ENCODE measurements at regions of chrX and their contacts with region 1.

Region 1: DNA sequence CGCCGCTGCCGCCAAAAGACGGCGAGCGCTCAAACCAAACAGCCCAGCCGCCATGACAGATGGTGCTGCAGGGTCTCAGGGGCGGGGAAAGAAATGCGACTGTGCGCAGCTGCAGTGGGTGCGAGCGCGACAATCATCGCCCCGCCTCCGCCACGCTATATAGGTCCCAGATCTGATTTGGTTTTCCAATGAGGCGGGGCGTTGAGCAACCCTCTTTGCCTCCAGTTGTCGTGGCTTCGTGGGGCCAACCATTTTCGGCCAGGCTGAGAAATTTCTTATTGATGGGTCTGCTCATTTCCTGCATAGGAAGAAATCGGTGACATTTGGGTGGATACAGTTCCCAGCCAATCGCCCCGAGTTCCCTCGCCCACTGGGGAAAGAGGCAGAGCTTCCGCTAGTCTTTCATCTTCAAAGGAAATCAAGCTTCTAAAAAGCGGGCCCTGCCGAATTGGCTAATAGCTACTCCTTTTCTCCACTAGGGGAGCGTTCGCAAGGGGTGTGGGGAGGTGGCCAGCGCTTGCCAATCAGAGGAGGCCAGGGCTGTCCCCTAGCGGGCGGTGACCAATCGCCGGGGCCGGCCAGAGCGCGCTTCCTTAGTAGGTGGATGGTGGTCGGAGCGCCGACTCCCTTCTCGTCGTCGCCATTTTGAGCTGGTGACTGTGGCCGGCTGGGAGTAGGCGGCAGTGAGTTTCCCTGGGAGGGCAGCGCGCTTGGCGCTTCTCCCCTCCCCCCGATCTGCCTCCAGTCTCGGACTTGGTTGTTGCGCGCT is at the starts of genes NDUFB11 and RBM10:
- DNase-seq: peak; percentile 73
- ATAC-seq: peak; percentile 90
- H3K4me3 Mint-ChIP-seq: peak within 1 kb of the TSS; percentile 96
- H3K27ac Mint-ChIP-seq: peak within 1 kb of the TSS; percentile 97
- H3K4me1 Mint-ChIP-seq: peaks cover 30% of the 10 kb centered on the region
- H3K27me3 Mint-ChIP-seq: no peaks in the 10 kb centered on the region
- CTCF ChIP-seq: no peak
- total RNA-seq, gene NDUFB11: 73.3 and 88.0 TPM in 2 replicates
- total RNA-seq, gene RBM10: 54.9 and 55.6 TPM in 2 replicates

Region 2: DNA sequence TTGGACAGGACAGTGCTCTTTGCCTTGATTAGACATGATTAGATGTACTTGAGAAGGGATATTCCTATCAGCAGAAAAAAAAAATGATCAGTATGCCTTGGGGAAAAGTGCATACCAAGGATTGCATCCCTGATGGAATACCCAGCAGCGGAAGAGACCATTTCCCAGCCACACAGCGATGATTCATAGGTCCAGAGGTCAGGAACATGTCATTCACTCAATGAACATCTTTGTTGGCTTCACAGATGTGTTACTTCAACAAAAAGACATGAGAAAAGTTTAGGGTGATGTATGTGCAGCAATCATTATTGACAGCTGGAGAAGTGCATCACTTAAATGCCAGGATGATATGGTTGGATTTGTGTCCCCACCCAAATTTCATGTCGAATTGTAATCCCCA is 893.1 kb before region 1 on chrX:
- CTCF ChIA-PET with region 1: no interaction called
- POLR2A ChIA-PET with region 1: no interaction called
- intact Hi-C with region 1: no loop called
- DNase-seq: no peak
- ATAC-seq: no peak
- H3K4me3 Mint-ChIP-seq: no peak overlapping the region
- H3K27ac Mint-ChIP-seq: no peak overlapping the region
- H3K4me1 Mint-ChIP-seq: peaks cover 11% of the 10 kb centered on the region
- H3K27me3 Mint-ChIP-seq: no peaks in the 10 kb centered on the region
- CTCF ChIP-seq: no peak

Region 3: GRCh38 chrX:47129157-47129898 is 15.5 kb before region 1 on chrX:
- CTCF ChIA-PET with region 1: interaction called, 4 read pairs
- POLR2A ChIA-PET with region 1: interaction called, 30 read pairs
- intact Hi-C with region 1: loop called (anchors 1 kb)
- DNase-seq: peak; percentile 76
- ATAC-seq: peak; percentile 98
- H3K4me3 Mint-ChIP-seq: peak overlapping the region; percentile 97
- H3K27ac Mint-ChIP-seq: peak overlapping the region; percentile 94
- H3K4me1 Mint-ChIP-seq: no peaks in the 10 kb centered on the region
- H3K27me3 Mint-ChIP-seq: no peaks in the 10 kb centered on the region
- CTCF ChIP-seq: no peak

Region 4: DNA sequence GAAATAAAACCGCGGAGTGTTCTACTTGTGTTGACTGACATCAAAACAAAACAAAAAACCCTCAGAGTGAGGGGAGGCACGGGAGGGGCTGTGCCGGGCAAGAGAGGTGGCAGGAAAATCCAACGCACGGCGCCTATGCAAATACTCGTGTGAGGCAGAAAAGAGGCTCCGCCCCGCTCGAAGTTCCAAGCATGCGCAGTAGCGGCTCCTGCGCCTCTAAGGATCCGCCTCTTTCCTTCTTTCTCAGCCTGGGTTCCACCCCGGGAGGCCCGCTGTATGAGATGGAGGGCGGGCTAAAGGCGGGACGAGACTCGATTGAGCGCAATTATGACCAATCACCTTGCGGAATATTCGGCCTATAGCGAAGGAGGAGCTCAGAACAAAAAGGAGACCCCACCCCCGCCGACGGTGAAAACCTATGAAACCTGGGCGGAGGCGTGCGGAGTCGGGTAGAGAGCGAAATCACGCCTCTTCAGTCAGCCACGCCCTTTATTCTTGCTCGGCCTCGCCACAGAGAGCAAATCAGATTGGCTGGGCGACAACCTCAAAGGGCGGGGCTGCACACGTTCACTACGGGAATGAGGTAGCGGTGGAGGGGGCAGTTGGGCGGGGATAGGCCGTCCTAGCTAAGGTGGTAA is 73.0 kb after region 1 on chrX:
- CTCF ChIA-PET with region 1: no interaction called
- POLR2A ChIA-PET with region 1: interaction called, 13 read pairs
- intact Hi-C with region 1: loop called (anchors 1 kb)
- DNase-seq: peak; percentile 84
- ATAC-seq: peak; percentile 80
- H3K4me3 Mint-ChIP-seq: peak overlapping the region; percentile 92
- H3K27ac Mint-ChIP-seq: peak overlapping the region; percentile 99
- H3K4me1 Mint-ChIP-seq: peaks cover 40% of the 10 kb centered on the region
- H3K27me3 Mint-ChIP-seq: no peaks in the 10 kb centered on the region
- CTCF ChIP-seq: no peak

Region 5: DNA sequence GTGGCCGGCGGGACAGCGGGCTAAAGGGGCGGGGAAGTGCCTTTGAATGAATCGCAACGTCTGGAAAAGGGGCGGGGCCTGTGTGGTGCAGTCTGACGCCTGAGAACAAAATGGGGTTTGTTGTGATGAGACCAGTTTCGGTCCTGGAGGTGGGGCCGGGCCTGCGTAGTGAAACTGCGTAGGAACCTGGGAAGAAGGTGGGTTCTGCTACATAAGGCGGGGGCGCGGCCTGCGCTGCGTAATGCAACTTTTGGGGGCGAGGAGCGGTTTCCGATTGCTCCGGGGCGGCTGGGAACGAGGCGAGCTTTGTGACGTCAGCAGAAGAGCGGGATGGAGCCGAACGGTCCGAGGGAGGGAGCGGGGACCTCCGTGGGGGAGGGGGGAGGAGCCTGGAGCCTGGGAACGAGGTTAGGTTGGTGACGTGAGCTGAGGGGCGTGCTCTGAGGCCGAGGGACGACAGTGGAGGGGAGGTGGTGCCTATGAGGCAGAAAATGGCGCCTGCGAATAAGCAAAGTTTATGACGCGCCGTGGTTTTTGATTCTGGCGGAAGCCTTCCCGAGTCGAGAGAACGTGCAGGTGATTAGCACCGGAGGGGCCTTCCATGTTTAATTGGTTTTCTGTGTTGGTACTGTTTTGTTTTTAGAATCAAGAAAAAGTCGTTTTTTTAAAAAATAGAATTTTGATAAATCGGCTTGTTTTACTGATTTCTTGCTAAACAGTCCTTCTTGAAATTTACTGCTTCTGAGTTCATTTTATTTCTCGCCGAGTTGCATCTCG is 88.7 kb after region 1 on chrX:
- CTCF ChIA-PET with region 1: no interaction called
- POLR2A ChIA-PET with region 1: interaction called, 9 read pairs
- intact Hi-C with region 1: loop called (anchors 1 kb)
- DNase-seq: peak; percentile 74
- ATAC-seq: peak; percentile 90
- H3K4me3 Mint-ChIP-seq: peak overlapping the region; percentile 92
- H3K27ac Mint-ChIP-seq: peak overlapping the region; percentile 98
- H3K4me1 Mint-ChIP-seq: peaks cover 15% of the 10 kb centered on the region
- H3K27me3 Mint-ChIP-seq: no peaks in the 10 kb centered on the region
- CTCF ChIP-seq: no peak

Region 6: DNA sequence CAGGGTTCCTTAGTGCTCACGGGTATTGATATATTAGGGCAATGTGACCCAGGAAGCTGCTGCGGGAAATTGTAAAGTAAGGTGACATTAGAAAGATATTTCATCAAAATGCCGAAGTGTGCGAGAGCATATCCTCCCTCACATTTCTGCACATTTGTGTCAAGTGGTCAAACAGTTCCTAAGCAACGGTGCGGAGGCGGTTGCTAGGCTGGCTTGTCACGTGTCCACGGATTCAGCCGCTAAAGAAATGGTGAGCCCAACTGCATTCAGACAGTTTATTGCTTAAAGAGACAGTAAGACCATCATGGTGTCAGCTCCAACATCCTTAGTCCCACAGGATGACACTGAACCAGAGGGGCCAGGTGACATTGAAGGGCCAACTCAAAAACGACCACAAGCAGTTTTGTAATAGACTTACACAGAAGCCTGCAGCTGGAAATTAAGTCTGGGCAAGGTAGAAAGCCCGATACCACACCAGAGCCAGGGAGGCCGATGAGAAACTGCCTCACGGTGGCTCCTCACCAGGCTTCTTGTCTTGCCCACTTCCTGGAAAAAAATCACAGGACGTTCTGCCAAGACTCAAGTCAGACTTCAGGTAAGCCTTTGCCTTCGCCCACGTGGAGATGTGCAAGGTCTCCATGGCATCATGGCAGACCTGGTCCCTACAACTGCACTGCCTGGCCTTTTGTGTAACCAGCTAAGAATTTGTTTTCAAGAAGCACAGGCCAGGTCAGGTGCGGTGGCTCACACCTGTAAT is 138.4 kb after region 1 on chrX:
- CTCF ChIA-PET with region 1: no interaction called
- POLR2A ChIA-PET with region 1: no interaction called
- intact Hi-C with region 1: no loop called
- DNase-seq: no peak
- ATAC-seq: no peak
- H3K4me3 Mint-ChIP-seq: no peak overlapping the region
- H3K27ac Mint-ChIP-seq: no peak overlapping the region
- H3K4me1 Mint-ChIP-seq: no peaks in the 10 kb centered on the region
- H3K27me3 Mint-ChIP-seq: no peaks in the 10 kb centered on the region
- CTCF ChIP-seq: no peak

Measured in activated B cell treated with CpG ODN at 0.5 μM for 24 hours (primary cell).